ENCODE measurements at regions of chr1 and their contacts with region 1.

Region 1: GRCh38 chr1:147890177-147890790 is 12.3 kb upstream of the GJA8 start:
- DNase-seq: peak; percentile 75
- ATAC-seq: peak; percentile 95
- H3K4me3 Mint-ChIP-seq: no peak overlapping the region
- H3K27ac Mint-ChIP-seq: no peak overlapping the region
- H3K4me1 Mint-ChIP-seq: peaks cover 4% of the 10 kb centered on the region
- H3K27me3 Mint-ChIP-seq: peaks cover 12% of the 10 kb centered on the region

Region 2: DNA sequence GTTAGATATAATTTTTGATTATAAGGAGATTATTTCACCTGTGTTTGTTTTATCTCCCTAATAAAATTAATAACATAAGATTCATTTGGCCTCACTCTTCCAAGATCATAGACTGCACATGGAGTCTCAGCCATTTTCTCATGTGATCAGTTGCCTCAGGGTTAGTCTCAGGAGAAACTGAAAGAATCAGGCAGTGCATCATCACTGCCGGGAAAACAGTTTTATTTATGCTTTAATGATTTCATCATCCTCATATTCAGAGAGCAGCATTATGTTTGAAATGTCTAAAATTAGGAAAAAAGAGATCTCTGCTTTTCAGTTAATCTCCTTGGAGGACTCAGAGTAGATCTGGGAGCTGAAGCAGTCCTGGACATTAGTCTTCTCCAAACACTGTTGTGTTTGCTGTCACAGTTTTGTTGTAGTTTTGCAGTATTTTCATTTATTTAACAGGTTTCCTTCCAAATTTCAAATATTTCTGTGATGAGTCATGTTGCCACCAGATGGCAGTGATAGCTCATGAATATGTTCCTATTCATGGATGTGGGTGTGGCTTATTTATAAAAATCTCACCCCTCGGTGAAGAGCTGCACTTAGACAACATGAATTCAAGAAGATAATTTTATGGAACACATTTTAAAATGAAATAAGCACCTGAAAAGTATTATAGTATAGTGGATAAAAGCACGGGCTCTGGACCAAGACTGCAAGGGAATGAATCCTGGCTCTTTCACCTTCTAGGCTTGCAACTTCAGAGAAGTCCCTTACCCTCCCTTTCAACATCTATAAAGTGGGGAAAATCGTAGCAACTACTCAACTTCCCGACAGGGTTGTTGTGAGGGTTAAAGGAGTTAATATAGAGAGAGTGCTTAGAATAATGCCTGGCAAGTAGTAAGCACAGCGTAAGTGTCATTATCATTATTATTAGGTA is 616.6 kb before region 1 on chr1:
- CTCF ChIA-PET with region 1: interaction called, 15 read pairs
- POLR2A ChIA-PET with region 1: no interaction called
- DNase-seq: peak; percentile 46
- ATAC-seq: peak; percentile 58
- H3K4me3 Mint-ChIP-seq: no peak overlapping the region
- H3K27ac Mint-ChIP-seq: no peak overlapping the region
- H3K4me1 Mint-ChIP-seq: no peaks in the 10 kb centered on the region
- H3K27me3 Mint-ChIP-seq: no peaks in the 10 kb centered on the region

Region 3: DNA sequence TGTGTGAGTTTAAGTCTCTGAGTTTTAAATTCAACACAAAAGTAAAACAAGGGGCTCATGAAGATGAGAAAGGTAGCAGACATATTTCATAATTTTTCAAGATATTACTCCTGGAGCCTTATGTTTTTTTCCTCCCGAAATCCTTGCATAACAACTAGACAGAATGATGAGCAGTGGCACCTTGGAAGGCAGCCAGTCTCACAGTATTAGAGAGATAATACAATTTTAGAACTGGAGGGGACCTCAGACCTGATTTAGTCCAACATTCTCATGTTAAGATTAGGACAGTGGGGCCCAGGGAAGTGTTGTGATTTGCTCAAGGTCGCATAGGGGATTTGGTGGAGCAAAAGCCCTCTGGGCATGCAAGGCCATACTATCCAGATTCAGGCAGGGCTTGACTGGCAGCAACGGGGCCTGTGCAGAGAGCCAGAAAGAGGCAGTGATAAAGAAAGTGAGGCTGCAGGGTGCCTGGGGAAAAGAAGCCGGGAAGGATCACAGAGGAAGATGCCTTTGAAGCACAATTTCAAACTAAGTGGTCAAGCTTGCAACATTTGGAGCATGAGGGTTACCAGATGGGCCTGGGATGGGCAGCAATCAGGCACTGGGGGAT is 380.4 kb before region 1 on chr1:
- CTCF ChIA-PET with region 1: interaction called, 12 read pairs
- POLR2A ChIA-PET with region 1: no interaction called
- DNase-seq: no peak
- ATAC-seq: no peak
- H3K4me3 Mint-ChIP-seq: no peak overlapping the region
- H3K27ac Mint-ChIP-seq: no peak overlapping the region
- H3K4me1 Mint-ChIP-seq: no peaks in the 10 kb centered on the region
- H3K27me3 Mint-ChIP-seq: peaks cover 12% of the 10 kb centered on the region

Region 4: DNA sequence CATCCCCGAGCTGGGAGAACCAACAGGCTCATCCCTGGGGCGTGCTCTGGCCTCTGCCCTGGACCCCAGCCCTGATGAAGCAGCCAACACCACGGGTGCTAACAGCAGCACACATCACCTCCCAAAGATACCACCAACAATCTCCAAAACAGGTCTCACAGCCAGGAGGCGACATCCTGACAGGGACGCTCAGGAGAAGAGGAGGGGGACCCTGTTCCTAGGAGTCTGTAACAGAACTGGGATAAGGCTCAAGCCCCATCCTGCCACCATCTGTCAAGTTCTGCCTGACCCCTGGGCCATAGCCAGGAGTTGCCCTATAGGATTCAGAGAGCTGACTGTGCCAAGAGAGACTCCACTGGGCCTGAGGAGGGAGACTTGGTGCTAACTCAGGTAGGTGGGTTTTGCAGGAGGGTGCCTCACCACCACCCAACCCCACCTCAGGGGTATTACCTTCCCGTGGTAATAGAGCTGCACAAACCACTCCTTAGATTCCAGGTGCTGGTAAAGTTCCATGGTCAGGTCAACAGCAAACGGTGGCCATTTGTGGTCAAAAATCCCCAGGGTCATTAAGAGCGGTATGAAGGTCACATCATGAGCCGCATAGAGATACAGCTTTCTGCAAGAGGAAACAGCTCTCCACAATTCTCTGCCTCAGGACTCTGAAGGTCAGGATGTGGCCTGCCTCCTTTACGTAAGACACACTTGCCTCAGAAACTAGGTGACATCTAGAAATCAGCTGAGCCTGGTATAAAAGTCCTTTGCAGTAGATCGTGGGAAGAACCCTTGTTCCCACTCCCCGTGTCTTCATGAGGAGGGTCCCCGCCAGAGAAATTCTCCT is 242.3 kb before region 1 on chr1:
- CTCF ChIA-PET with region 1: interaction called, 15 read pairs
- POLR2A ChIA-PET with region 1: no interaction called
- DNase-seq: peak; percentile 79
- ATAC-seq: peak; percentile 88
- H3K4me3 Mint-ChIP-seq: peak overlapping the region; percentile 67
- H3K27ac Mint-ChIP-seq: peak overlapping the region; percentile 82
- H3K4me1 Mint-ChIP-seq: peaks cover 75% of the 10 kb centered on the region
- H3K27me3 Mint-ChIP-seq: no peaks in the 10 kb centered on the region

Region 5: DNA sequence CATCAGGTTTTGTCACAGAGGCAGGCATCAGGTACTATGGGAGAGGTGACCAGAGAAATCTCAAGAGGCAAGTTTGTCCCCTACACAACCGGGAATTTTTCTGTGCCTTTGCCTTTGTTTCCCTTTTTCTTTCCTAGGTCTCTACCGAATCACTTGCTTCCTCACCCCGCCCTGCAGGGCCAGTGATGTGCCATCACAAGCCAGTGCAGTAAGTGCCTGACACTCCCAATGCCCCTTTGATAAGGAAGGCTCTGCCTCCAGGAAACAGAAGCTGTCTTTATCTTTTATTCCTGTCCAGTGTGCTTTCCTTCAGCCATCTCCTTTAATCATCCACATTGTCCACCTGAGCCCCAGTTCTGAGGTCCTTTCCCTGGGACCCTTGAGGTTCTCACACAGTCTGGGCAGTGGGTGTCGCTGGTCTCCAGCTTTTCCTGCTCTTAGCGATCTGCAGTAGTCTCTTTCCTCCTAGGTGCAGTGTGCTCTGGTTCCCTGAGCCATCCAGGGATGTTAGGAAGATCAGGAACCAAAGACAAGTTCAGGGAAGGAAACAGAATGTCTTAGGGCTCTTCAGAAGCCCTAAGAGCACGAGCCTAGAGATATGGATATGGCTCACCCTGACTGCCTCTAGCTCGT is 166.5 kb before region 1 on chr1:
- CTCF ChIA-PET with region 1: interaction called, 20 read pairs
- POLR2A ChIA-PET with region 1: no interaction called
- DNase-seq: peak; percentile 25
- ATAC-seq: no peak
- H3K4me3 Mint-ChIP-seq: no peak overlapping the region
- H3K27ac Mint-ChIP-seq: no peak overlapping the region
- H3K4me1 Mint-ChIP-seq: no peaks in the 10 kb centered on the region
- H3K27me3 Mint-ChIP-seq: peaks cover 30% of the 10 kb centered on the region

Region 6: GRCh38 chr1:147794570-147794969 is 95.7 kb before region 1 on chr1:
- CTCF ChIA-PET with region 1: no interaction called
- POLR2A ChIA-PET with region 1: no interaction called
- DNase-seq: no peak
- ATAC-seq: no peak
- H3K4me3 Mint-ChIP-seq: no peak overlapping the region
- H3K27ac Mint-ChIP-seq: no peak overlapping the region
- H3K4me1 Mint-ChIP-seq: no peaks in the 10 kb centered on the region
- H3K27me3 Mint-ChIP-seq: peaks cover 17% of the 10 kb centered on the region

Region 7: DNA sequence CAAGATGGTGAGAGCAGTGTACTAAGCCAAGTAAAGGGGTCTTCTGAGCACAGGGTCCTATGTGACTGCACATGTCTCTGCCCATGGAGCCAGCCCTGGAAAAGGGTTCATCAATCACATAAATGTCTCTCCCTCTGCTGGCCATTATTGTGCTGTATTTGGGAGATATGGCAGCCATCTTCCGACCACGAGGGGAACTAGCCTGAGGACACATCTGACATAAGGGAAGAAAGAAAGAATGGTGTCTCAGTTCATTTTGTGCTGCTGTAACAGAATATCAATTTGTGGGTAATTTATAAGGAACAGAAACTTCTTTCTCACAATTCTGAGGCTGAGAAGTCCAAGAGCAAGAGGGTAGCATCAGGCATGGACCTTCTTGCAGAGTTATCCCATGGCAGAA is 74.8 kb before region 1 on chr1:
- CTCF ChIA-PET with region 1: no interaction called
- POLR2A ChIA-PET with region 1: no interaction called
- DNase-seq: no peak
- ATAC-seq: no peak
- H3K4me3 Mint-ChIP-seq: no peak overlapping the region
- H3K27ac Mint-ChIP-seq: no peak overlapping the region
- H3K4me1 Mint-ChIP-seq: no peaks in the 10 kb centered on the region
- H3K27me3 Mint-ChIP-seq: peaks cover 15% of the 10 kb centered on the region

Region 8: DNA sequence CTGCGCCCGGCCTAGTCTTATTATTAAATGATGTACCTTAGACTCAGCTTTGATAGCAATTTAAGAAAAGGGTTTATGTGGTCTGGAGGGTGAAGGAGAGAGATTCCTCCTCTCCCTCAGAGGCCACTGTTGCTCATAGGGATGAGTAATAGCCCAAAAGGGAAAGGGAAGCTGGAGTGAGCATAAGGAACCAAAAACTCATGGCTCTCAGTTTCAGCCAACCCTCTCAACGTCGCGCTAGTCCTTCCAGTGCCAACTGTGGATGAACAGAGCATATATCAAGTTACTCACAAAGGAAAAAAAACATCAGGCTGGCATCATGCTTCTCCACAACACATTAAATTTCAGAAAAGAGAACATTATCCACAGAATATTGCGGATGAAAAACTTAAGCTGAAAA is 29.6 kb after region 1 on chr1:
- CTCF ChIA-PET with region 1: interaction called, 11 read pairs
- POLR2A ChIA-PET with region 1: no interaction called
- DNase-seq: no peak
- ATAC-seq: no peak
- H3K4me3 Mint-ChIP-seq: no peak overlapping the region
- H3K27ac Mint-ChIP-seq: no peak overlapping the region
- H3K4me1 Mint-ChIP-seq: no peaks in the 10 kb centered on the region
- H3K27me3 Mint-ChIP-seq: peaks cover 30% of the 10 kb centered on the region

Measured in activated CD8-positive, alpha-beta T cell treated with anti-CD3 and anti-CD28 coated beads, Interleukin-2, amount 10 ng/mL, durations not matched to agents 7 days and 5 days (primary cell).